Spleen (tissue), 13 donors: ENCODE measurements at regions of chr11 and their contacts with region 1.

Region 1: GRCh38 chr11:17598700-17599459 is 51.8 kb downstream of the OTOG start:
- DNase-seq: peak; percentile 90
- H3K4me3 ChIP-seq: no peak overlapping the region
- H3K27ac ChIP-seq: no peak overlapping the region
- H3K4me1 ChIP-seq: peaks cover 0 to 3% (median 0%) of the 10 kb centered on the region in 6 donors
- H3K27me3 ChIP-seq: peaks cover 0 to 28% (median 0%) of the 10 kb centered on the region in 7 donors
- CTCF ChIP-seq: peak; percentile 54 to 93 (median 84)
- POLR2A ChIP-seq: no peak

Region 2: DNA sequence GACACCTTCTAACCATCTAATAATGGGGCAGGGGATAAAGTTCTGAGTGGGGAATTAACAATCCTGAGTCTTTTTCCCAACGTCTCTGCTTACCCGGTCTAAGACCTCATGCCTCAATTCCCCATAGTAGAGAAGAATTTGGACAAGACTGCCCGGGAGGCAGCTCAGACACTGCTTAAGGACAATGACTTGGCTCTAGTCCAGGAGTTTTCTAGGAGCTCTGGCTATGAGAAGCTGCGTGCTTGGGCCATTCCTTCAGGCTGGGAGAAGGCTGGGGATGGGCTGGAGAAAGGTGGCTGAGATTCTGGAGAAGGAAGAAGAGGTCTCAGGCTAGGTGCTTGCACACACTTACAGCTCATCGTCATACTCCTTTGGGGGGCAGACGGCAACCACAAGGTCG is 102.5 kb before region 1 on chr11:
- intact Hi-C with region 1: no loop called
- DNase-seq: no peak
- H3K4me3 ChIP-seq: no peak overlapping the region
- H3K27ac ChIP-seq: no peak overlapping the region
- H3K4me1 ChIP-seq: no peaks in the 10 kb centered on the region
- H3K27me3 ChIP-seq: peaks cover 0 to 16% (median 0%) of the 10 kb centered on the region in 7 donors
- CTCF ChIP-seq: no peak
- POLR2A ChIP-seq: no peak

Region 3: DNA sequence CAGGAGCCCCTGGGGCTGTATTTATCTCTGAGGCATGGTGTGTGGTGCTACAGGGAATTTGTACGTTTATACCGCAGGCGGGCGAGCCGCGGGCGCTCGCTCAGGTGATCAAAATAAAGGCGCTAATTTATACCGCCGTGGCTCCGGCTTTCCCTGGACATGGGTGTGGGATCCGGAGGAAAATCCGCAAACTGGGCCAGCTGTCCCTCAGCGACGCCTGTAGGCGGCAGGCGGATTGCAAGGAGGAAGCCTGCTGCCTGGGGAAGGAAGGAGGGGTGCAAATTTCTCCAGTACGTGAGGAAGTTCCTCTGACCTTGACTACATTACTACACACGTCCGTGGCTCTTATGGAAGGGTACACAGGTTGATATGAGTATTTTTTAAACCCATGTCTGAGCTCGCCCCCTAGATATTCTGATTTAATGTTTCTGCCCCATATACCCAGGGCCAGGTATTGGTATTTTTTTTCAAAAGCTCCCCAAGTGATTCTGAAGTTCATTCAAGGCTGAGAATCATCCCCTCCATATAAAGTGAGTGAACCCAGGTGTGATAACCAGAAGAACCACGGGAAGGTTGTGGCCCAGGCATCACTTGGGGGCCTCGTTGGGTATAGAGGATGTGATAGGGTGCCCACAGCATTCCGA is 123.2 kb after region 1 on chr11:
- intact Hi-C with region 1: loop called (anchors 10 kb)
- DNase-seq: no peak
- H3K4me3 ChIP-seq: peak overlapping the region in 1 of 8 donors; percentile 27
- H3K27ac ChIP-seq: no peak overlapping the region
- H3K4me1 ChIP-seq: peaks cover 0 to 39% (median 26%) of the 10 kb centered on the region in 6 donors
- H3K27me3 ChIP-seq: peaks cover 3 to 90% (median 53%) of the 10 kb centered on the region in 7 donors
- CTCF ChIP-seq: peak in 3 of 11 experiments; percentile 24 to 35 (median 31)
- POLR2A ChIP-seq: no peak